ENCODE measurements at regions of chr4 and their contacts with region 1.

Region 1: GRCh38 chr4:173420324-173420752 is 21.4 kb upstream of the SCRG1 start:
- DNase-seq: peak; percentile 12
- ATAC-seq: peak; percentile 67
- H3K4me3 ChIP-seq: no peak overlapping the region
- H3K27ac ChIP-seq: no peak overlapping the region
- H3K4me1 ChIP-seq: peaks cover 0 to 5% of the 10 kb centered on the region in 2 experiments; a peak in 1 of 4 replicates
- H3K27me3 ChIP-seq: no peaks in the 10 kb centered on the region
- CTCF ChIP-seq: peak; percentile 31 to 62 (median 56); a peak in 3 of 6 replicates
- POLR2A ChIP-seq: no peak
- RAD21 ChIP-seq: peak; percentile 63

Region 2: DNA sequence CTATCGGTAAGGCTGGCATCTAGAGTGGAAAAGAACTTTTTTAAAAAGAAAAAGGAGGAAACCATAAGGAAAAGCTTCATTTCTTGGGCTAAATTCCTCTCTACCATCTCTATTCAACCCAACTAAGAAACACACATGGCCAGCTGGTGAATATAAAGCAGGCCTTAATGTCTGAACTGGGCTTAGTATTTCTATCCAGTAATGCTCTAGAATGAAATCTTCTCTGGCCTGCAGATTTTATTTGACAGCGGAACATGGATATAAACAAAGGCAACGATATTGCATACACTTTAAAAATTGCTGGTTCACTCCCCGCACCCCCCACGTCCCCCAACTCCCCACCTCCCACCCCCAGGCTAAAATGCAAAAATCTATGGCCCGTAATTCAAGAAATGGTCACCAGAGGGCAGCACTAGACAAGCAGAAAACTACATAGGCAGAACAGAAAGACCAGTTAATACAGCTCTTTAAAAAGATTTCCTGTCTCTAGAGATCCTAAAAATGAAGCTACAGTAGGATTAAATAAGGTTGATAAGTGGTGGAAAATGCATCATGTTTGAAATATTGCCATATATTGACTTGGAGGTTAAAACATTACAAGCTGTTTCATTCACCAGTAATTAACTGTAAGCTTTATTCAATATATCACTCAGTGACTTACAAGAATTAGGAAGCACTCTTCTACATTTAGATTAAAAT is 407.0 kb before region 1 on chr4:
- CTCF ChIA-PET with region 1: interaction called, 13 read pairs
- POLR2A ChIA-PET with region 1: no interaction called
- RAD21 ChIA-PET with region 1: interaction called in 1 of 2 experiments, 4 read pairs
- intact Hi-C with region 1: loop called (anchors 1 kb)
- DNase-seq: no peak
- ATAC-seq: peak; percentile 61
- H3K4me3 ChIP-seq: no peak overlapping the region
- H3K27ac ChIP-seq: no peak overlapping the region
- H3K4me1 ChIP-seq: peaks cover 0 to 9% of the 10 kb centered on the region in 2 experiments; a peak in 2 of 4 replicates
- H3K27me3 ChIP-seq: no peaks in the 10 kb centered on the region
- CTCF ChIP-seq: peak; percentile 50 to 71 (median 69)
- POLR2A ChIP-seq: no peak
- RAD21 ChIP-seq: peak; percentile 81

Region 3: GRCh38 chr4:173494013-173494970 is 74.0 kb after region 1 on chr4:
- CTCF ChIA-PET with region 1: interaction called, 27 read pairs
- POLR2A ChIA-PET with region 1: no interaction called
- RAD21 ChIA-PET with region 1: interaction called, 5 to 7 read pairs
- intact Hi-C with region 1: loop called (anchors 1 kb)
- DNase-seq: peak; percentile 72
- ATAC-seq: peak; percentile 98
- H3K4me3 ChIP-seq: peak overlapping the region; percentile 7; a peak in 1 of 4 replicates
- H3K27ac ChIP-seq: no peak overlapping the region
- H3K4me1 ChIP-seq: peaks cover 4 to 11% of the 10 kb centered on the region in 2 experiments; a peak in 3 of 4 replicates
- H3K27me3 ChIP-seq: no peaks in the 10 kb centered on the region
- CTCF ChIP-seq: peak; percentile 83 to 90 (median 87)
- POLR2A ChIP-seq: no peak
- RAD21 ChIP-seq: peak; percentile 75

Region 4: GRCh38 chr4:173752610-173753230 is 332.4 kb after region 1 on chr4:
- CTCF ChIA-PET with region 1: interaction called, 10 read pairs
- POLR2A ChIA-PET with region 1: no interaction called
- RAD21 ChIA-PET with region 1: no interaction called
- intact Hi-C with region 1: no loop called
- DNase-seq: peak; percentile 58
- ATAC-seq: peak; percentile 78
- H3K4me3 ChIP-seq: no peak overlapping the region
- H3K27ac ChIP-seq: no peak overlapping the region
- H3K4me1 ChIP-seq: no peaks in the 10 kb centered on the region
- H3K27me3 ChIP-seq: peaks cover 5% of the 10 kb centered on the region; the same call in 1 of the 2 replicates
- CTCF ChIP-seq: peak; percentile 30 to 91 (median 83); a peak in 5 of 6 replicates
- POLR2A ChIP-seq: no peak
- RAD21 ChIP-seq: peak; percentile 38

Region 5: DNA sequence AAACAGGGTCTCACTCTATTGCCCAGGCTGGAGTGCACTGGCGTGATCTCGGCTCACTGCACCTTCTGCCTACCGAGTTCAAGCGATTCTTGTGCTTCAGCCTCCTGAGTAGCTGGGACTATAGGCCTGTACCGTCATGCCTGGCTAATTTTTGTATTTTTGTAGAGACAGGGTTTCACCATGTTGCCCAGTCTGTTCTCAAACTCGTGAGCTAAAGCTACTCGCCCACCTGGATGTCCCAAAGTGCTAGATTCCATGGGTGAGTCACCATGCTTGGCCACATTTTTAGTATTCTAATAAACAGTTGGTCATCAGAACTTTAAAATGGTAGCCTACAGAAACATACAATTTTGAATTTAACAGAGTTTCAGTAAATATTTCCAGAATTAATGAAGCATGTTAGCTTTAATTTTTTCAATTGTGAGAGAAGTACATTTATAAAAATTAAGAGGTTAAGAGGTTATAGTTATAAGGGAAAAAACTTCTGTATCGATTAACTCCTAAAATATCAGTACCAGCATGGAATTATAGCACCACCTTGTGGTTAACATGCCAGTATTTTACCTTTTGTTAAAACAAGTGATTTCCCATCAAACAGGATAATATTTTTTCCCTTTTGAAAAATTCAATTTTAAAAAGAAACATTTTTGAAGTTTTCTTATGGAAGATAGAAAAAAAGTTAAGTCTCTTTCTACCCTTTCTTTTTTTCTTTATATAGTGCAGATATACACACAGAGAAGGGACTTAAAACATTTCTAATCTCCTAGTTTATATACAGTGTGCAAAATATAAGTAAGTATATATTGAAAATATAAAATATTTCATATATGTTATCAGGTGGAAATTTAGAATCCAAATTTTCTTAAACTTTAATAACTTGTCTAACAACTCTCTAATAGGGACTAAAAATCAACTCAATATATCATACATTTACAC is 898.8 kb after region 1 on chr4:
- CTCF ChIA-PET with region 1: interaction called, 5 read pairs
- POLR2A ChIA-PET with region 1: no interaction called
- RAD21 ChIA-PET with region 1: no interaction called
- intact Hi-C with region 1: loop called (anchors 1 kb)
- DNase-seq: peak; percentile 22
- ATAC-seq: no peak
- H3K4me3 ChIP-seq: no peak overlapping the region
- H3K27ac ChIP-seq: no peak overlapping the region
- H3K4me1 ChIP-seq: no peaks in the 10 kb centered on the region
- H3K27me3 ChIP-seq: no peaks in the 10 kb centered on the region
- CTCF ChIP-seq: peak; percentile 51 to 77 (median 51); a peak in 4 of 6 replicates
- POLR2A ChIP-seq: no peak
- RAD21 ChIP-seq: peak; percentile 68

Measured in HCT116 (cell line).